Mammary epithelial cell (primary cell): ENCODE measurements at regions of chr12 and their contacts with region 1.

Region 1: DNA sequence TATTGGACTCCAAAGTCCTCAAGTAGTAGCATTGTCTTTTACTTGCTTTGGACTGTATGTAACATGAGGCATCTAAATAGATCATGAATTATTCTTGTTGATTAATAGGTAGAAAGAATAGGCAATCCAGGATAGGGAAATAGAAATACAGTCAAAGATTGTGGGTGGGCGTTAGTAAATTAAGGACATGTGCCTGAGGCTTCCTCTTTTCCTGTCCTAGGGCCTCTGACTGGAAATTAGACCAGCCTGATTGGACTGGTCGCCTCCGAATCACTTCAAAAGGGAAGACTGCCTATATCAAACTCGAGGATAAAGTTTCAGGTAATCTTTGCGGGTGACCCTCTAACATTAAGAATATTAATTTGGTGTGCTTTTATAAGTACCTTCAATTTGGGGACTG is 7.6 kb downstream of the NECAP1 start:
- DNase-seq: no peak
- H3K4me3 ChIP-seq: no peak overlapping the region
- H3K27ac ChIP-seq: no peak overlapping the region
- H3K4me1 ChIP-seq: no peaks in the 10 kb centered on the region
- H3K27me3 ChIP-seq: no peaks in the 10 kb centered on the region
- CTCF ChIP-seq: no peak

Region 2: GRCh38 chr12:8127138-8127537 is 37.4 kb after region 1 on chr12:
- CTCF ChIA-PET with region 1: no interaction called
- dilution Hi-C with region 1: loop called (anchors 5 kb)
- in situ Hi-C with region 1: no loop called
- intact Hi-C with region 1: no loop called
- DNase-seq: no peak
- H3K4me3 ChIP-seq: no peak overlapping the region
- H3K27ac ChIP-seq: no peak overlapping the region
- H3K4me1 ChIP-seq: no peaks in the 10 kb centered on the region
- H3K27me3 ChIP-seq: no peaks in the 10 kb centered on the region
- CTCF ChIP-seq: no peak